ENCODE measurements at regions of chr2 and their contacts with region 1.

Region 1: DNA sequence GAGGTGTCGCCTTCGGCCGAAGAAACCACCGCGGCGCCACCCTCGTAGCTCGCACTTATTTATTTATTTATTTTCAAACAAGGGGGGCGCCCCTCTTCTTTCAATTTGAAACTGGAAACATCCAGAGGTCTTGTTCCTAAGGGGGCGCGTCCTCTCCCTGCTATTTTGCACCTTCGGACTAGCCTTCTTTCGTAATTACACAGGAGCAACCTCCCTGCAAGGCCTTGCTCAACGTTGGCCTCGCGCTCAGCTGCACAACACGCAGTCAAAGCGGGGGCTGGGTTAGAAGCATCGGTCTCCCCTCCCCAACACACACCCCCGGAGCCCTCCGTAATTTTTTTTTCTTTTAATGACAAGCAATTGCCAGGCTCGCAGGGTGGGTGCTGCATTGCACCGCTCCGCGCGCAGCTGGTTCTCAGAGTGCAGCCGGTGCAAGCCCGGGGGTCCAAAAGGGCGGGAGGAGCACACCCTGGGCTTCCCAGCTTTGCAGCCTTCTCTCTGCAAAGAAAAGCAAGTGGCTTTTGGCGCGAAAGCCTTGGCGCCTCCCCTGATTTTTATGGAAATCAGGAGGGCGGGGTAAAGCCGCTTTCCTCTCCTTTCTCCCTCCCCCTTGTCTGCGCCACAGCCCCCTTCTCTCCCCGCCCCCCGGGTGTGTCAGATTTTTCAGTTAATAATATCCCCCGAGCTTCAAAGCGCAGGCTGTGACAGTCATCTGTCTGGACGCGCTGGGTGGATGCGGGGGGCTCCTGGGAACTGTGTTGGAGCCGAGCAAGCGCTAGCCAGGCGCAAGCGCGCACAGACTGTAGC is at the start of gene MYCN:
- DNase-seq: no peak
- ATAC-seq: peak; percentile 55
- H3K4me3 ChIP-seq: peak within 1 kb of the TSS; percentile 19 to 46
- H3K27ac ChIP-seq: no peak within 1 kb of the TSS
- H3K4me1 ChIP-seq: peaks cover 12% of the 10 kb centered on the region
- H3K27me3 ChIP-seq: peaks cover 26% of the 10 kb centered on the region
- CTCF ChIP-seq: peak; percentile 88
- total RNA-seq, gene MYCN: not detected

Region 2: GRCh38 chr2:15955295-15956166 is 15.5 kb after region 1 on chr2:
- CTCF ChIA-PET with region 1: no interaction called
- POLR2A ChIA-PET with region 1: no interaction called
- in situ Hi-C with region 1: no loop called
- intact Hi-C with region 1: no loop called
- DNase-seq: no peak
- ATAC-seq: no peak
- H3K4me3 ChIP-seq: no peak overlapping the region
- H3K27ac ChIP-seq: no peak overlapping the region
- H3K4me1 ChIP-seq: no peaks in the 10 kb centered on the region
- H3K27me3 ChIP-seq: no peaks in the 10 kb centered on the region
- CTCF ChIP-seq: no peak

Region 3: DNA sequence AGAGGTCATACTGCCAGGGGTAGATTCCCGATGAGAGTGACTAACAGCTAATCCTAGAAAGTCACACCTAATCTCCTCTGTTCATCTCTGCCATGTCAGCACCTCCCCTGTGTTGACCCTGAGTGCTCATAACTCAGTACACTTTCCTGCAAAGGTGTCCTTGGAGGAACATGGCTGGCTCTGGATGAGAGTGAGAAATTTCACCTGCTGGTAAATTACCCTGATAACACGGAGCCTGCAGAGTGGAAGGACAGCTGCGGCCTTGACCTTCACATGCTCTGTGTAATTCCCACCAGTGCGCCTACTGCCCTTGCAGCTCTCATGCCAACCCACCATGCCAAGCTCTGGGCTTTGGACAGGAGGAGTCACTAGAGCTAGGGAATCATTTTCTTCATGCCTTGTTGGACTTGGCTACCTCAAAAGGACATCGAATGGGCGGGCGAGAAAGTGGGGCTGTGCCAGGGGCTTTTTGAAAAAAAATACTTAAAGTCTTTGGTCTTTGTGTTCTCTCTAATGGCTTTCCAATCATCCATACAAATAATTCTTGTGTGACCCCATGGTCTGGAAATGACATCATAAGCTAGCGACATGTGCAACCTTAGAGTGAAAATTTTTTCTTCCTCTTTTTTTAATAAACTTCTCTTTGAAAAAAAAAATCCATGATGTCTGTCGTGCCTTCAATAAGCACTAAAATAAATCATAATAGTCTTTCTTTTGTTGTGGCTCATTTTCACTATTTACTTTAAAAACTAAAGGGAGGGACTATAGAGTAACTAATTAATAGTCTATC is 320.2 kb after region 1 on chr2:
- CTCF ChIA-PET with region 1: no interaction called
- POLR2A ChIA-PET with region 1: no interaction called
- in situ Hi-C with region 1: no loop called
- intact Hi-C with region 1: loop called (anchors 10 kb)
- DNase-seq: no peak
- ATAC-seq: no peak
- H3K4me3 ChIP-seq: no peak overlapping the region
- H3K27ac ChIP-seq: no peak overlapping the region
- H3K4me1 ChIP-seq: no peaks in the 10 kb centered on the region
- H3K27me3 ChIP-seq: no peaks in the 10 kb centered on the region
- CTCF ChIP-seq: no peak

Region 4: GRCh38 chr2:16507655-16508489 is 567.8 kb after region 1 on chr2:
- CTCF ChIA-PET with region 1: no interaction called
- POLR2A ChIA-PET with region 1: no interaction called
- in situ Hi-C with region 1: no loop called
- intact Hi-C with region 1: loop called (anchors 2 kb)
- DNase-seq: no peak
- ATAC-seq: peak; percentile 97
- H3K4me3 ChIP-seq: peak overlapping the region; percentile 21 to 25
- H3K27ac ChIP-seq: no peak overlapping the region
- H3K4me1 ChIP-seq: no peaks in the 10 kb centered on the region; the same call in 1 of the 2 replicates
- H3K27me3 ChIP-seq: peaks cover 8% of the 10 kb centered on the region
- CTCF ChIP-seq: peak; percentile 88

Measured in Panc1 (cell line).